Heart right ventricle (tissue), 16 donors: ENCODE measurements at regions of chr11 and their contacts with region 1.

Region 1: DNA sequence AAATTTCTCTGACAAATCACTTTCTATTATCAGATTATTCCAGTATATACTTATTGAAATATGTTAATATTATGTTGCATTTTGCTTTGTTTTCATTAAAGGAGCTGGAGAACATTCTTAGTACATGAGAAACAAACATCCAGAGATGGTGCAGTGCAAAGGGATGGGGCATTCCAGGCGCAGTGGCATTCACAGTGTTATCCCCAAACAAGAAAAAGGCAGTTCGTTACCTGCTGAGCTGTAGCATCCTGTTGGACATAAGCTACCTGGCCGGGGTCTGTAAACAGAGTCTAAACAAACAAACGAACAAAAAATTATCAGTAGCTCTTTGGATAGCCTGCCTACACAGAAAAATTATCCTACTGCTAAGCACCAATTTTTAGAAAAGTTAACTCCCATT is 47.4 kb downstream of the PRDM10 start:
- DNase-seq: no peak
- ATAC-seq: no peak
- H3K4me3 ChIP-seq: no peak overlapping the region
- H3K27ac ChIP-seq: no peak overlapping the region
- H3K4me1 ChIP-seq: peaks cover 0 to 13% (median 7%) of the 10 kb centered on the region in 9 donors
- H3K27me3 ChIP-seq: no peaks in the 10 kb centered on the region
- CTCF ChIP-seq: no peak

Region 2: GRCh38 chr11:129911298-129911697 is 44.0 kb before region 1 on chr11:
- intact Hi-C with region 1: no loop called
- DNase-seq: no peak
- ATAC-seq: no peak
- H3K4me3 ChIP-seq: no peak overlapping the region
- H3K27ac ChIP-seq: no peak overlapping the region
- H3K4me1 ChIP-seq: peaks cover 0 to 4% (median 0%) of the 10 kb centered on the region in 9 donors
- H3K27me3 ChIP-seq: no peaks in the 10 kb centered on the region
- CTCF ChIP-seq: no peak

Region 3: DNA sequence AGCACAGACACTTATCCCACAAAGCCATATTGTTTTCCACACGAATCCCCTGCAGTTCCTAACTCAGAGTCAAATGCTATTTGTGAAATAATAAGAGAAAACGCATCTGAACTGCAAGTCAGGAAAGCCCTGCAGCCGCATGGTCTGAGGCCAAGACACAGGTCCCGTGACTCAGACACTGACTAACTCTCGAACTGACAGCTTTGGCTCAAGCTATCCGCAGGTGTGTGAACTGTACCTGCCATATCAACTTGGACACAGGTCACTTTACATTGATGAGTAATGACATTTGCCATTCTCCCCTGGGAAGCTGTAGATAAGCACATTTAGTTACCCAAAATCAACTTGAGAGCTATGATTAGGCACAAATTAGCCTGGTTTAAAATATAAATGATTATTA is 25.0 kb before region 1 on chr11:
- intact Hi-C with region 1: loop called in 1 of 10 experiments (anchors 2 kb)
- DNase-seq: no peak
- ATAC-seq: no peak
- H3K4me3 ChIP-seq: no peak overlapping the region
- H3K27ac ChIP-seq: no peak overlapping the region
- H3K4me1 ChIP-seq: peaks cover 0 to 14% (median 0%) of the 10 kb centered on the region in 9 donors
- H3K27me3 ChIP-seq: no peaks in the 10 kb centered on the region
- CTCF ChIP-seq: no peak

Region 4: GRCh38 chr11:130979386-130979972 is 1024.2 kb after region 1 on chr11:
- intact Hi-C with region 1: no loop called
- DNase-seq: no peak
- ATAC-seq: no peak
- H3K4me3 ChIP-seq: no peak overlapping the region
- H3K27ac ChIP-seq: no peak overlapping the region
- H3K4me1 ChIP-seq: no peaks in the 10 kb centered on the region
- H3K27me3 ChIP-seq: peaks cover 0 to 8% (median 0%) of the 10 kb centered on the region in 7 donors
- CTCF ChIP-seq: peak in 8 of 9 donors; percentile 8 to 59 (median 45)